GM23248 (cell line): ENCODE measurements at regions of chr14 and their contacts with region 1.

Region 1: GRCh38 chr14:68824517-68825347 is 31.9 kb upstream of the ZFP36L1 start:
- DNase-seq: peak; percentile 83
- H3K4me3 ChIP-seq: no peak overlapping the region
- H3K27ac ChIP-seq: no peak overlapping the region
- H3K4me1 ChIP-seq: no peaks in the 10 kb centered on the region
- H3K27me3 ChIP-seq: no peaks in the 10 kb centered on the region

Region 2: GRCh38 chr14:67943947-67944346 is 880.8 kb before region 1 on chr14:
- in situ Hi-C with region 1: loop called (anchors 10 kb)
- DNase-seq: peak; percentile 88
- H3K4me3 ChIP-seq: no peak overlapping the region
- H3K27ac ChIP-seq: no peak overlapping the region
- H3K4me1 ChIP-seq: peaks cover 39% of the 10 kb centered on the region
- H3K27me3 ChIP-seq: no peaks in the 10 kb centered on the region

Region 3: GRCh38 chr14:68695326-68695768 is 129.4 kb before region 1 on chr14:
- in situ Hi-C with region 1: no loop called
- DNase-seq: peak; percentile 99
- H3K4me3 ChIP-seq: no peak overlapping the region
- H3K27ac ChIP-seq: peak overlapping the region; percentile 89
- H3K4me1 ChIP-seq: peaks cover 37% of the 10 kb centered on the region
- H3K27me3 ChIP-seq: no peaks in the 10 kb centered on the region